CD4-positive, alpha-beta T cell (primary cell): ENCODE measurements at regions of chr2 and their contacts with region 1.

Region 1: GRCh38 chr2:213934560-213934959 is 476.3 kb upstream of the VWC2L start:
- DNase-seq: peak in 3 of 14 experiments; percentile 29 to 41 (median 33)
- ATAC-seq: no peak
- H3K4me3 ChIP-seq: no peak overlapping the region
- H3K4me3 Mint-ChIP-seq: no peak overlapping the region
- H3K27ac ChIP-seq: no peak overlapping the region
- H3K27ac Mint-ChIP-seq: no peak overlapping the region
- H3K4me1 ChIP-seq: no peaks in the 10 kb centered on the region
- H3K4me1 Mint-ChIP-seq: no peaks in the 10 kb centered on the region
- H3K27me3 ChIP-seq: no peaks in the 10 kb centered on the region
- H3K27me3 Mint-ChIP-seq: peaks cover 7% of the 10 kb centered on the region
- CTCF ChIP-seq: peak; percentile 36

Region 2: DNA sequence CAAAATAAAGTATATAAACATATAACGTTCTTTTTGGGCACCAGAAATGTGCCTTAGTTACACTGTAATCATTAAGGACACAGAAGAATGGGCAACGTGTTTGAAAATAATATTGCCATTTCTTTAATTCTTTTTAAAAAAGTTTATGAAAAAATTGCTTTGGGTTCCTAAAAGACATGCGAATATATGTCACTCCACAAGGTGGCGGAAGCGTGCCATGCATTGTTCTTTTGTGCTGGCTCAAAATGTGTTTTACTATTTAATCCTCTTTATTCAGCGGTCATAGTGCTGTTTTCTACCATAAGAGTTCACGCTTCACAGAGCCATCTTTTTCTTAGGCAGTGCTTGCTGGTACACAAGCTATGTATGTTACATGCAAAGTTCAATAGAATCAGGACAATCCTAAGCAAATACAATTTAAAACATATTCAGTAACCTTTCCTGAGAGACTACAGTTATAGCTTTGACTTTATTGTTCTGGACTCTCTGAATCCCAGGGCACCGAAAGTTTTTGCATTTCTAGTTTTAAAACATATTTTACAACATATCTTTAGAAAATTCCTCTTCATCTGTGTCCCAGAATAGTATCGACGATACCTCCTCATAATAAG is 1248.2 kb before region 1 on chr2:
- CTCF ChIA-PET with region 1: no interaction called
- POLR2A ChIA-PET with region 1: no interaction called
- intact Hi-C with region 1: loop called (anchors 5 to 10 kb)
- DNase-seq: peak; percentile 5 to 74 (median 30)
- ATAC-seq: peak; percentile 48
- H3K4me3 ChIP-seq: no peak overlapping the region
- H3K4me3 Mint-ChIP-seq: no peak overlapping the region
- H3K27ac ChIP-seq: no peak overlapping the region
- H3K27ac Mint-ChIP-seq: no peak overlapping the region
- H3K4me1 ChIP-seq: no peaks in the 10 kb centered on the region
- H3K4me1 Mint-ChIP-seq: peaks cover 4% of the 10 kb centered on the region
- H3K27me3 ChIP-seq: no peaks in the 10 kb centered on the region
- H3K27me3 Mint-ChIP-seq: peaks cover under 1% of the 10 kb centered on the region
- CTCF ChIP-seq: peak; percentile 85

Region 3: DNA sequence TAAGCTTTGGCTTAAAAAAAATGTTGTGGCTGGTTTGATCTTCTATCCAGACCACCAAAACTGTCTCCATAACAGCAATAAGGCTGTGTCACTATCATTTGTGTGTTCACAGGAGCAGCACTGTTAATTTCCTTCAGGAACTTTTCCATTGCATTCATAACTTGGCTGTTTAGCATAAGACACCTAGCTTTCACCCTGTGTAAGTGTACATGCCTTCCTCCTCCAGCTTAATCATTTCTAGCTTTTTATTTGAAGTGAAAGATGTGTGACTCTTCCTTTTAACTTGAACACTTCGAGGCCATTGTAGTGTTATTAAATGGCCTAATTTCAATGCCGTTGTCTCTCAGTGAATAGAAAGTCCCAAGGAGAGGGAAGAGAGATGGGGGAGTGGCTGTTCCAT is 123.4 kb after region 1 on chr2:
- CTCF ChIA-PET with region 1: no interaction called
- POLR2A ChIA-PET with region 1: no interaction called
- intact Hi-C with region 1: no loop called
- DNase-seq: no peak
- ATAC-seq: no peak
- H3K4me3 ChIP-seq: no peak overlapping the region
- H3K4me3 Mint-ChIP-seq: no peak overlapping the region
- H3K27ac ChIP-seq: no peak overlapping the region
- H3K27ac Mint-ChIP-seq: no peak overlapping the region
- H3K4me1 ChIP-seq: no peaks in the 10 kb centered on the region
- H3K4me1 Mint-ChIP-seq: no peaks in the 10 kb centered on the region
- H3K27me3 ChIP-seq: no peaks in the 10 kb centered on the region
- H3K27me3 Mint-ChIP-seq: no peaks in the 10 kb centered on the region
- CTCF ChIP-seq: no peak

Region 4: DNA sequence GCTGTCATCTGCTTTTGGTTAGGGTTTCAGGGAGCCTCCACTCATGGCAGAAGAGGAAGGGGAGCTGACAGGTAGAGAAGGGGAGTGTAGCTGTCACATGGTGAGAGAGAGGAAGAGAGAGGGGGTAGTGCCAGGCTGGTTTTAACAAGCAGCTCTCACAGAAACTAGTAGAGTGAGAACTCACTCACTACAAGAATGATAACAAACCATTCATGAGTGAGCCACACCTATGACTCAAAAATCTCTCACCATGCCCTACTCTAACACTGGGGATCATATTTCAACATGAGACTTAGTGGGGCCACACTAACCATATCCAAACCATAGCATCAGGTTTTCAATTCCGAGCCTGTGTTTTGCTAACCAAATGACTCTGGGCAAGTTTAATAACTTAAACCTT is 201.4 kb after region 1 on chr2:
- CTCF ChIA-PET with region 1: no interaction called
- POLR2A ChIA-PET with region 1: no interaction called
- intact Hi-C with region 1: no loop called
- DNase-seq: no peak
- ATAC-seq: no peak
- H3K4me3 ChIP-seq: no peak overlapping the region
- H3K4me3 Mint-ChIP-seq: no peak overlapping the region
- H3K27ac ChIP-seq: no peak overlapping the region
- H3K27ac Mint-ChIP-seq: no peak overlapping the region
- H3K4me1 ChIP-seq: no peaks in the 10 kb centered on the region
- H3K4me1 Mint-ChIP-seq: no peaks in the 10 kb centered on the region
- H3K27me3 ChIP-seq: no peaks in the 10 kb centered on the region
- H3K27me3 Mint-ChIP-seq: no peaks in the 10 kb centered on the region
- CTCF ChIP-seq: no peak

Region 5: GRCh38 chr2:214192711-214193110 is 258.2 kb after region 1 on chr2:
- CTCF ChIA-PET with region 1: no interaction called
- POLR2A ChIA-PET with region 1: no interaction called
- intact Hi-C with region 1: no loop called
- DNase-seq: no peak
- ATAC-seq: no peak
- H3K4me3 ChIP-seq: no peak overlapping the region
- H3K4me3 Mint-ChIP-seq: no peak overlapping the region
- H3K27ac ChIP-seq: no peak overlapping the region
- H3K27ac Mint-ChIP-seq: no peak overlapping the region
- H3K4me1 ChIP-seq: no peaks in the 10 kb centered on the region
- H3K4me1 Mint-ChIP-seq: no peaks in the 10 kb centered on the region
- H3K27me3 ChIP-seq: no peaks in the 10 kb centered on the region
- H3K27me3 Mint-ChIP-seq: no peaks in the 10 kb centered on the region
- CTCF ChIP-seq: no peak

Region 6: DNA sequence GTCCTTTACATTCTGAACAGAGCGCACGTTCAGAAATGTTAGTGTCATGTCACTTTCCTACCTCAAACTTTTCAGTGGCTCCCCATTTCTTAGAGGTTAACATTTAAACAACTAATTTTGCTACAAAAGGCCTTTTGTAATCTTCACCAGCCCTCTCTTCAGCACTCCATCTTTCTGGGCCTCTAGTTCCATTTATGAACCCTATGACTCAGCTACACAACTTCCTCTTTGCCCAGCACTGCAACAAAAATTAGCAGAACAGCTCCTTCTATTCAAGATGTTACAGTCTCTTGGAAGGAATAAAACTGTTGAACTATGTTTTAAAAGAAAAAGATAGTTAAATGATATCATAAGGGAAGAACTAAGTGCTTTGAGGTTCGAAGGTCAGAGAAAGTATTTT is 616.2 kb after region 1 on chr2:
- CTCF ChIA-PET with region 1: no interaction called
- POLR2A ChIA-PET with region 1: no interaction called
- intact Hi-C with region 1: no loop called
- DNase-seq: no peak
- ATAC-seq: no peak
- H3K4me3 ChIP-seq: no peak overlapping the region
- H3K4me3 Mint-ChIP-seq: no peak overlapping the region
- H3K27ac ChIP-seq: no peak overlapping the region
- H3K27ac Mint-ChIP-seq: no peak overlapping the region
- H3K4me1 ChIP-seq: no peaks in the 10 kb centered on the region
- H3K4me1 Mint-ChIP-seq: no peaks in the 10 kb centered on the region
- H3K27me3 ChIP-seq: no peaks in the 10 kb centered on the region
- H3K27me3 Mint-ChIP-seq: no peaks in the 10 kb centered on the region
- CTCF ChIP-seq: no peak